PC-3 (cell line): ENCODE measurements at regions of chr3 and their contacts with region 1.

Region 1: GRCh38 chr3:192566706-192567290 is 160.5 kb downstream of the FGF12 start:
- DNase-seq: peak; percentile 85
- ATAC-seq: peak; percentile 91
- H3K4me3 ChIP-seq: no peak overlapping the region
- H3K27ac ChIP-seq: no peak overlapping the region
- H3K4me1 ChIP-seq: 0 out of 2 replicates have a peak, but pooled peaks cover 4% of the 10 kb centered on the region
- H3K27me3 ChIP-seq: peaks cover 22% of the 10 kb centered on the region
- CTCF ChIP-seq: peak; percentile 80

Region 2: GRCh38 chr3:192467230-192468140 is 99.3 kb before region 1 on chr3:
- CTCF ChIA-PET with region 1: no interaction called
- POLR2A ChIA-PET with region 1: no interaction called
- intact Hi-C with region 1: loop called (anchors 1 kb)
- DNase-seq: peak; percentile 82
- ATAC-seq: peak; percentile 92
- H3K4me3 ChIP-seq: no peak overlapping the region
- H3K27ac ChIP-seq: no peak overlapping the region
- H3K4me1 ChIP-seq: no peaks in the 10 kb centered on the region
- H3K27me3 ChIP-seq: peaks cover 83% of the 10 kb centered on the region
- CTCF ChIP-seq: peak; percentile 95

Region 3: GRCh38 chr3:192745130-192745529 is 178.3 kb after region 1 on chr3:
- CTCF ChIA-PET with region 1: no interaction called
- POLR2A ChIA-PET with region 1: no interaction called
- intact Hi-C with region 1: no loop called
- DNase-seq: no peak
- ATAC-seq: no peak
- H3K4me3 ChIP-seq: no peak overlapping the region
- H3K27ac ChIP-seq: no peak overlapping the region
- H3K4me1 ChIP-seq: no peaks in the 10 kb centered on the region
- H3K27me3 ChIP-seq: peaks cover 27% of the 10 kb centered on the region
- CTCF ChIP-seq: no peak

Region 4: GRCh38 chr3:192772240-192772894 is 205.6 kb after region 1 on chr3:
- CTCF ChIA-PET with region 1: interaction called, 4 read pairs
- POLR2A ChIA-PET with region 1: no interaction called
- intact Hi-C with region 1: loop called (anchors 1 kb)
- DNase-seq: peak; percentile 70
- ATAC-seq: peak; percentile 100
- H3K4me3 ChIP-seq: no peak overlapping the region
- H3K27ac ChIP-seq: no peak overlapping the region
- H3K4me1 ChIP-seq: no peaks in the 10 kb centered on the region
- H3K27me3 ChIP-seq: peaks cover 18% of the 10 kb centered on the region
- CTCF ChIP-seq: peak; percentile 88

Region 5: DNA sequence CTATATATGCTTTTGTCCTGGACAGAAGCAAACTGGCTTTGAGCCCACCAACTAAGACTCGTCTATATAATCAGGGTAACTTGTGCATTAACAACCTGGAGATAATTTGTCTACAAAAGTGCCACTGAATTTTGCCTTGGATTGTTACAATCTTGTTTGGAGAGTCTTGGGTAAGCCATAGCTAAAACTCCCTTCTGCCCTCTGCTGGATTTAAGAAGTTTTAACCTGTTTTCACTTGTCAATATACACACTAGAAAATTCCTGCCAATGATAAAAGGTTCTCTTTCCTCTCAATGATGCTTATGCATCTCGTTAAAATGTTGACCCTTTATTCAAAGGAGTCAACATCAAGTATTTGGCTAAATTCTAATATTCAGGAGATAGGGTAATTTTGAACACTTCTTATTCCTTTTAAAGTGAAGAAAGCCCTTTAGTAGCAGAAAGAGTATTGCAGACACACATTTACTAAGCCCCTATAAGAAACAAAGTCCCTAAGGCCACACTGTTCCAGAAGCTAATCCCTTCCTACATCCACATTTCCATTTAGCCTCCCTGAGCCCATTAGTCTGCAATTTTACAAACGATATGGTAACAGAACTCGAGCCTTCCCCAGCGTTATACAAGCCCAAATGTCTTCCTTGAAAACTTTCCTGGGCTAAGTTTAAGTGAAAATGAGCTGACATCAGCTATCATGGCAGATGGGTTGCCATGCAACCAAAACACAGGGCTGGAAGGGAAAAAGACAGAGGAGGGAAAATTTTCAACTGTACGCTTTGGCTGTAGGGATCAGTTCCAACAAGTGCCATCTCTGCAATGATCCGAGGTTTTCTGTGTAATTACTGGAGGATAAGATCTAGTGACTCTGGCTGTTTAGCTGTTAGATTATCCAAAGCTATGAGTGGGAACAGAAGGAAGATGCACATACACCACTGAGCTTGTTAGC is 236.4 kb after region 1 on chr3:
- CTCF ChIA-PET with region 1: interaction called, 3 read pairs
- POLR2A ChIA-PET with region 1: no interaction called
- intact Hi-C with region 1: loop called (anchors 1 kb)
- DNase-seq: peak; percentile 66
- ATAC-seq: peak; percentile 68; the same call in 1 of the 2 replicates
- H3K4me3 ChIP-seq: no peak overlapping the region
- H3K27ac ChIP-seq: no peak overlapping the region
- H3K4me1 ChIP-seq: no peaks in the 10 kb centered on the region
- H3K27me3 ChIP-seq: no peaks in the 10 kb centered on the region
- CTCF ChIP-seq: peak; percentile 75

Region 6: DNA sequence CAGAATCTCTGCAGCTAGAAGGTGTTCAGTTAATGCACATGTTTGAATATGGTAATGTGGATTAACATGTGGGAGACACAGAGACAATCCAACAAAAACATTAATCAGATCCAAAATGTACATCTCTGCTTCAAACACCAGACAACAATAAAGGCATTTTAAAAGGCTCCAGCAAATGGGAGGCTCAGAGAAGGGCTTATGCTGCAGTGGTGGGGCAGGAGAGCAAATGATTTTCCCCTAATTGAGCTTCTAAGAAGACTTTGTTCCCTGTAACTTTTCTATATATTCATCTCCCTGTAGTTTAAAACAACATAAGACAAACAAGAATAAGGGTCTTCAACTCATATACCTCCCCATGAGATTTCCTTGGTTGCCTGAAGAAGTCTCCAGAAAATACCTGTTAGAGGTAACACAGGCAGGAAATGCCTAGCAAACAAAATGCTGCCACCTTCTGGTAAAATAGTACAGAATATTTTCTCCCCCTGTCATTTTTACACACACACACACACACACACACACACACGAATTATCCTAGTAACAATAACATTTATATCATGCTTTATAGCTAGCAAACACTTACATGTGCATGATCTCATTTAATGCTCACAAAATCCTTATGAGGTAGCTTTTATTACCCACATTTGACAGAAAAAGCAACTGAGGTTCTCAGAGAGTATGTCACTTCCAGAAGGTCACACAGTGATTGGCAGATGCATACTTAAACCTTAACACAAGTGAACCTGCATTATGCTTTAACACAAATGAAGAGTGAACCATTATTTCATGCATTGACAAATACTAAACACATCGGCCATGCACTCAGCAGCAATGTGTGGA is 474.3 kb after region 1 on chr3:
- CTCF ChIA-PET with region 1: no interaction called
- POLR2A ChIA-PET with region 1: no interaction called
- intact Hi-C with region 1: loop called (anchors 10 kb)
- DNase-seq: peak; percentile 81
- ATAC-seq: peak; percentile 89
- H3K4me3 ChIP-seq: no peak overlapping the region
- H3K27ac ChIP-seq: no peak overlapping the region
- H3K4me1 ChIP-seq: no peaks in the 10 kb centered on the region
- H3K27me3 ChIP-seq: no peaks in the 10 kb centered on the region
- CTCF ChIP-seq: peak; percentile 83

Region 7: DNA sequence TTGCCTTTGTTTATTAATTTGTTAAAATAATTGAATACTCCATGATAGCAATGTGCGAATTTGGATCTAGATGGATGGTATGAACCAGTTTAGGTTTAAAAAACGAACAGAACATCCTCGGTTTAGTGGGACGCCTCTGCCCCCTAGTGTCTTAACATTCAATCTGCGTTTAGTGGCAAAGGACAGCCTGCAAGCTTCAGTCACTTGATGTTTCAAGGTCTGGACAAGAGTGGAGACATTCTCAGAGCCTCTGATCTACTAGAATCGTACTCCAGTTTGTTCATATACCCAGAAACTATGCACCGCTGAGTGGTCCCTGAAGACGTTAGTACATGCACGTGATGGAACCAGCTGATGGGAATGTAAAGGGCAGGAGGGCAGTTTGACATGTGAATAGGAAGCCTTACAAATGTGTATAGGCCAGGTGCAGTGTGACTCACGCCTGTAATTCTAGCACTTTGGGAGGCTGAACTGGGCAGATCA is 1005.7 kb after region 1 on chr3:
- CTCF ChIA-PET with region 1: interaction called, 3 read pairs
- POLR2A ChIA-PET with region 1: no interaction called
- intact Hi-C with region 1: loop called (anchors 1 kb)
- DNase-seq: peak; percentile 80
- ATAC-seq: peak; percentile 93
- H3K4me3 ChIP-seq: no peak overlapping the region
- H3K27ac ChIP-seq: no peak overlapping the region
- H3K4me1 ChIP-seq: peaks cover 6% of the 10 kb centered on the region
- H3K27me3 ChIP-seq: peaks cover 41% of the 10 kb centered on the region
- CTCF ChIP-seq: peak; percentile 96